Ovary (tissue), 10 donors: ENCODE measurements at regions of chr6 and their contacts with region 1.

Region 1: DNA sequence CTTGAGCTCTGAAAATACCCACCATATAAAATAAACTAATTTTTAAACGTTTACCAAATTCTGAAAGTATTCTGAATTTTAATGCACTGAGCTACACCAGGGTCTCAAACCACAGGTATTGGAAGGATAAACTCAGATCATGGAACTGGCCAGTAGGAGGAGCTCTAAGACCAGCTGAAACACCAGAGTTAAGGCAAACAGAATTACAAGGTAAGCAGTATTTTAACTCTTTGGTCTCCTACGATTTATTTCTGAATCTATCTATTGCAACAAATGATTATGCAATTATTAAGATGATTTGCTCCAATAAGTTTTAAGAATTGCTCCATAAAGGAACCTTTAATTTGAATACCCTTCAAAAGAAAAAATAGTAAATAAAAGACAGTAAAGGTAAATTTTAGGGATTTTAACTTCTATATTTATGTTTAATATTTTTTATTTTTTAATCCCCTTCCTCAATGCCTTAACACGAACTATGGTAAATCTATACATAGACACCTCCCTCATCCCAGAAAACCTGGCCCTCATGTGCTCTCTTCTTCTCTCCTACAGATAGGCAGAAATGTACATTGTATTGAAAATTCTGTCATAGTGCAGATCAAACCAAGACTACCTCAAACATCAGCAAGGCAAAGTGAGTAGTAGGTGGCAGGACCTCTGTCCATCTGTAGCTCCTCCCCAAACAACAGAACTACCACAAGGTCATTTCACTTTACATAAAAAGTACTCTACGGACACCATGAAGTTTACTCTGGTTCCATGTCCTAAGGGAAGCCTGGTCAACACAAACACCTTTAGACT is 58.4 kb downstream of the SMLR1 start:
- DNase-seq: peak in 4 of 5 donors; percentile 53 to 82 (median 66)
- H3K4me3 ChIP-seq: no peak overlapping the region
- H3K27ac ChIP-seq: no peak overlapping the region
- H3K4me1 ChIP-seq: no peaks in the 10 kb centered on the region
- H3K27me3 ChIP-seq: no peaks in the 10 kb centered on the region
- CTCF ChIP-seq: peak; percentile 68 to 94 (median 90)
- EP300 ChIP-seq: no peak
- POLR2A ChIP-seq: no peak

Region 2: DNA sequence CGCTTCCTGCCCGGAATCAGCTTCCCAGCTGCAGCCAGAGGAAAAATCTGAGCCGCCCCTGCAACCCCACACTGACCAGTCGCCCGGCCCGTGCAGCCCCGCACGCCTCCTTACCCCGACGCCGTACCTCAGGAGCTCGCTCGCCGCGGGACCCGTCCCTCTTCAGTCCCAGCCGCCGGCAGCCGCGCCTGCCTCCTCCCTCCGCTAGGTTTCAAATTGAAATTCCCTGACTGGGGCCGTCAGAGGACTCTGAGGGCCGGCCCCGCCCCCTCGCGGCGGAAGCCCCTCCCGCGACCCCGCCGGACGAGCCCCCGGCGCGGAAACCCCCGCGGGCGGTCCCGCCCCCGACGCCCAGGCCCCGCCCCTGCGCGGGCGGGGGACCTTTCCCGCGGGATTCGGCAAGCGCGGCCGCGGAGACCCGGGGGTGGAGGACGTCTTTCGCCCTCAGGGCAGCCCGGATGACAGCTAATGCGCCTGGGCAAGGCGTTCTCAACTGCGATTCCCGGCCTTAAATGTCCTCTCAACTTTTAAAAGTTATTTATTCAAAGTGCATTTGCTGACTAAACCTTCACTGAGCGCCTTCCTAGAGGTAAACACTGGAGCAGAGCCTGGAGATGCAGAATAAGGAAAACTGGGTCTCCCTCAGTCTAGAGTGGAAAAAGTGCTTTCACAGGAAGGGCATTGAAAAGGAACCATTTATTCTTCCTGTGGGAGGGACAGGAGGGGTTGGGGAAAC is 177.6 kb after region 1 on chr6 and contains the start of gene EPB41L2:
- intact Hi-C with region 1: loop called in 2 of 4 experiments (anchors 5 to 10 kb)
- DNase-seq: peak; percentile 90 to 96 (median 93)
- H3K4me3 ChIP-seq: peak within 1 kb of the TSS; percentile 98
- H3K27ac ChIP-seq: peak within 1 kb of the TSS; percentile 65 to 81
- H3K4me1 ChIP-seq: peaks cover 3% of the 10 kb centered on the region
- H3K27me3 ChIP-seq: no peaks in the 10 kb centered on the region
- CTCF ChIP-seq: peak; percentile 29 to 51 (median 50)
- EP300 ChIP-seq: no peak
- POLR2A ChIP-seq: peak; percentile 84
- total RNA-seq, gene EPB41L2: 113 to 256 (median 204) TPM

Region 3: GRCh38 chr6:131116749-131117360 is 231.3 kb after region 1 on chr6:
- intact Hi-C with region 1: loop called (anchors 2 to 10 kb)
- DNase-seq: no peak
- H3K4me3 ChIP-seq: no peak overlapping the region
- H3K27ac ChIP-seq: no peak overlapping the region
- H3K4me1 ChIP-seq: no peaks in the 10 kb centered on the region
- H3K27me3 ChIP-seq: no peaks in the 10 kb centered on the region
- CTCF ChIP-seq: peak in 2 of 3 donors; percentile 10 to 63
- EP300 ChIP-seq: no peak
- POLR2A ChIP-seq: no peak

Region 4: DNA sequence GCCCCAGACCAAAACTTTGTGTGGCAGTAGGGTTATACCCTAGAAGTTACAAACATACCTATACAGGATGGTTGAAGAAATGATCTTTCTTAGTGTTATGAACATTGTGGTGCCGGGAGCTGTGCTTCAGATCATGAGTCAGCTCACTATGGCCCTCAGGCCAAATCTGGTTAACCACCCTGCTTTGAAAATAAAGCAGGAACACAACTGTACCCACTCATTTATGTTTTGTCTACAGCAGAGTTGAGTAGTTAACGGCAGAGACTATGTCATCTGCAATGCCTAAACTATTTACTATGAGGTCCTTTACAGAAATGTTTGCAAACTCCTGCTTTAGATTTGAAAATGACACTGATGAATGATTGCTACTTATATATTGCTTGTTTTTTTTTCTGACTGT is 274.0 kb after region 1 on chr6:
- intact Hi-C with region 1: loop called in 2 of 4 experiments (anchors 5 to 10 kb)
- DNase-seq: no peak
- H3K4me3 ChIP-seq: no peak overlapping the region
- H3K27ac ChIP-seq: no peak overlapping the region
- H3K4me1 ChIP-seq: peaks cover 6% of the 10 kb centered on the region
- H3K27me3 ChIP-seq: no peaks in the 10 kb centered on the region
- CTCF ChIP-seq: no peak
- EP300 ChIP-seq: no peak
- POLR2A ChIP-seq: no peak

Region 5: GRCh38 chr6:131167773-131168172 is 282.2 kb after region 1 on chr6:
- intact Hi-C with region 1: loop called in 2 of 4 experiments (anchors 5 to 10 kb)
- DNase-seq: no peak
- H3K4me3 ChIP-seq: no peak overlapping the region
- H3K27ac ChIP-seq: no peak overlapping the region
- H3K4me1 ChIP-seq: peaks cover 2% of the 10 kb centered on the region
- H3K27me3 ChIP-seq: no peaks in the 10 kb centered on the region
- CTCF ChIP-seq: peak in 1 of 3 donors; percentile 12
- EP300 ChIP-seq: no peak
- POLR2A ChIP-seq: no peak